Right ventricle myocardium superior (tissue), 1 donor: ENCODE measurements at regions of chr9 and their contacts with region 1.

Region 1: GRCh38 chr9:76810377-76810957 is 46.2 kb downstream of the PCA3 start:
- DNase-seq: no peak
- ATAC-seq: peak; percentile 80

Region 2: GRCh38 chr9:76893395-76893932 is 83.0 kb after region 1 on chr9:
- intact Hi-C with region 1: no loop called
- DNase-seq: no peak
- ATAC-seq: no peak

Region 3: DNA sequence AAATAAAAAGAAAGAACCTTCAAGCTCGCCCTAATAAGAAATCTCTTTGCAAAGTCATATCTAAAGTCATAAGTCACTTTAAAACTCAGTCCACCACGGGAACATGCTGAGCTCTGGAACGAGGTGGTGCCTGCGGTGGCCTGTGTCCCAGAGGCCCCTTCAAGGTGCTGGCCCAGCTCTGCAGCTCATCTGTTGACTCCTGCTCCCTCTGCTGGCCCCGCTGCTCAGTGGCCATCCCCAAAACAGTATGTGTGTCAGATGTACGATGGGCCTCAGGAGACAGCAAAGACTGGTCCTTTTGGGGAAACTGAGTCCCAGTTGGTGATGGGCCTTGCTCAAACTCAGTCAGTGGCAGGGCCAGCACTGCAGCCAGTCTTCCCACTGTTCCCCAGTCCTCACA is 186.2 kb after region 1 on chr9:
- intact Hi-C with region 1: loop called (anchors 5 kb)
- DNase-seq: peak; percentile 77
- ATAC-seq: peak; percentile 87

Region 4: DNA sequence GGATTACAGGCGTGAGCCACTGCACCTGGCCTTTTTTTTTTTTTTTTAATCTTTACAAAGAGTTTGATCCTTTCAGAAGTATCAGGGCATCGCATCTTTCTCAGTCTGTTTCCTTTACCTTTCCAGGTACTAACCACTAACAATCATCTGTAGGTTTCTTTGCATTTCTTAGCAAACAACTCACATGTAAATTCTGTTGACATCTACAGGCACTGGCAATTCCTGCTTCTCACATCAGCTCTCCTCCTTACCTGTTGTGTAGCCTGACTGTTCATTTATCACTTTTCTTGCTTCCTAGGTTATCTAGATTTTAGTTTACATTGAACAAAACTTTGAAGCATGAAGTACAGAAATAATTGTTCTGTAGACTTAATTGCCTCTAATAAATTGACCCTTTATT is 339.4 kb after region 1 on chr9:
- intact Hi-C with region 1: loop called (anchors 5 kb)
- DNase-seq: no peak
- ATAC-seq: no peak